ENCODE measurements at regions of chr11 and their contacts with region 1.

Region 1: DNA sequence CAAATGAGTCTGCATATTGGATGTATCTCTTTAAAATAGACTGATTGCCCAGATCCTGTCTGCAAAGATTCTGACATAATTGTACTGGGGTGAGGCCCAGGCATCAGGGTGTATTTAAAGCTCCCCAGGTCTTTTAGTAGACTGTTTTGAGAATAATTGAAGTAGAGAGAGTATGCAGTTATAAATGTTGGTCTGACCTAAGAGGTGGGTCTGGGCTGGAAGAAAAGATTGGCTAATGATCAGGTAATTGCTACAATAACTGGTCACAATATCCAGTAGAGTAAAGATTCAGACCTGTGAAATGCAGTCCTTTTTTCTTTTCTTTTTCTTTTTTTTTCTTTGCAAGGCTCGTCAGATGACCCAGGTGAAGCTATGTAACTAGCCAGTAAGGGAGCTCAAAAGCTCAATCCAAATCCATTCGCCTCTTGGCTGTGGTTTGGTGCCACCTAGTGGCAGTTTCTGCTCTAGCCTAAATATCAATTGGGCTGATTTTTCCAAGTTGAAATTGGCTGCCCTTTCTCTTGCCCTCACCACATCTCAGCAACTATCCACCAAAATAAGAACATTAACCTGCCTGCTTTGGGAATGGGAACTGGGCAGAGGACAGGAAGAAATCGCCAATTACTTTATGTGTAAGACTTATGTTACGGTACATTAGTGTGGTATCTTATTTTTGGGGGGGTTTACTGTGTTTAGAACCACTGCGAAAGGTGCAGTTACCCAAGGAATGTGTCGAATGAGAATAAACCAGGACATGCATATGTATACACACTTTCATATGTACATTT is 45.9 kb downstream of the ZNF143 start:
- DNase-seq: peak; percentile 88
- ATAC-seq: peak; percentile 88
- H3K4me3 Mint-ChIP-seq: no peak overlapping the region
- H3K27ac Mint-ChIP-seq: no peak overlapping the region
- H3K4me1 Mint-ChIP-seq: peaks cover 4% of the 10 kb centered on the region
- H3K27me3 Mint-ChIP-seq: no peaks in the 10 kb centered on the region

Region 2: DNA sequence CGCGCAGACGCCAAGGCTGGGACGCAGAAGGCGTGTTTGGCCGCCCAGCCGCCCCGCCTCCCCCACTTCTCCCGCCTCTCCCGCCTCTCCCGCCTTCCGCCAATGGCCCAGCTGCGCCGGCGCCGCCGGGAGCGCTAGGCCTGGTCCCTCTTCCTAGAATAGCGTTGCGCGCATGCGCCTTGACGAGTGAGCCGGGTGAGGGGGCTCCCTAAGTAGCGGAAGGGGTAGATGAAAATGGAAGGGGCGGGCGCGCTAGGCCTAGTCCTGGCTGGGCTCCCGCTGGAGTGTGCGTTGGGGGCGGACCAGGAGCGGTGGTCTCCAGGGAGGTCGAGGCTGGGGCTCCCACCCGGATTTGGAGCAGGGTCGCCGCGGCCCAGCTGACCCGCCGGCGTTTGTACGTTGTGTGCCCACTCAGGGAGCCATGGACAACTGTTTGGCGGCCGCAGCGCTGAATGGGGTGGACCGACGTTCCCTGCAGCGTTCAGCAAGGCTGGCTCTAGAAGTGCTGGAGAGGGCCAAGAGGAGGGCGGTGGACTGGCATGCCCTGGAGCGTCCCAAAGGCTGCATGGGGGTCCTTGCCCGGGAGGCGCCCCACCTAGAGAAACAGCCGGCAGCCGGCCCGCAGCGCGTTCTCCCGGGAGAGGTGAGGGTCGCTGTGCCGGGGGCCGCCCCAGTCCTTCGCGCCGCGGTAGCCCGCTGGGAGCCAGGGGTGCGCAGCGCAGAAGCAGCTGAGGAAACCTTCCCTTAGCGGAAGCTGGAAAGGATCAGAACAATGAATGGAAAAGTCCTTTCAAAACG is 595.5 kb before region 1 on chr11 and contains the start of gene AKIP1:
- CTCF ChIA-PET with region 1: interaction called, 5 read pairs
- POLR2A ChIA-PET with region 1: no interaction called
- intact Hi-C with region 1: loop called in 1 of 2 experiments (anchors 2 kb)
- DNase-seq: peak; percentile 94
- ATAC-seq: peak; percentile 76
- H3K4me3 Mint-ChIP-seq: peak within 1 kb of the TSS; percentile 86
- H3K27ac Mint-ChIP-seq: peak within 1 kb of the TSS; percentile 89
- H3K4me1 Mint-ChIP-seq: peaks cover 45% of the 10 kb centered on the region
- H3K27me3 Mint-ChIP-seq: peaks cover 6% of the 10 kb centered on the region
- total RNA-seq, gene AKIP1: 29.8 to 32.2 TPM

Region 3: DNA sequence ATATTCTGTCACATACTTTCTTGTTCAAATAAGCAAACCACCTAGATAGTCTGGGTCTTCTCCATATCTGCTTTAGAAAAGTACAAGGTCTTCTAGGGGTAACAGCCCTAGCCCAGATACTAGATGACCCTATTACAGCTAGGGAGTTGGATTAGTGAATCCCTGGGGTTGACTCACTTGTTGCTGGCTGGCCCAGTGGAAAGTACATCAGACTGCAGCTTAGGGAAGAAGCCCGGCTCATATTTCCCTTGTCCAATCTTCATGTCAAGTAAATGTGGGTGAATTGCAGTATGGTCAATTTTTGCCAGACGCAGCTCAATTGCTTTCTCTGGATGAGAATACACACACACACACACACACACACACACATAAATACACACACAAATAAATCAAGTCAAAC is 336.2 kb before region 1 on chr11:
- CTCF ChIA-PET with region 1: interaction called, 54 read pairs
- POLR2A ChIA-PET with region 1: interaction called, 3 read pairs
- intact Hi-C with region 1: loop called (anchors 1 kb)
- DNase-seq: no peak
- ATAC-seq: no peak
- H3K4me3 Mint-ChIP-seq: no peak overlapping the region
- H3K27ac Mint-ChIP-seq: no peak overlapping the region
- H3K4me1 Mint-ChIP-seq: peaks cover 13% of the 10 kb centered on the region
- H3K27me3 Mint-ChIP-seq: no peaks in the 10 kb centered on the region

Region 4: DNA sequence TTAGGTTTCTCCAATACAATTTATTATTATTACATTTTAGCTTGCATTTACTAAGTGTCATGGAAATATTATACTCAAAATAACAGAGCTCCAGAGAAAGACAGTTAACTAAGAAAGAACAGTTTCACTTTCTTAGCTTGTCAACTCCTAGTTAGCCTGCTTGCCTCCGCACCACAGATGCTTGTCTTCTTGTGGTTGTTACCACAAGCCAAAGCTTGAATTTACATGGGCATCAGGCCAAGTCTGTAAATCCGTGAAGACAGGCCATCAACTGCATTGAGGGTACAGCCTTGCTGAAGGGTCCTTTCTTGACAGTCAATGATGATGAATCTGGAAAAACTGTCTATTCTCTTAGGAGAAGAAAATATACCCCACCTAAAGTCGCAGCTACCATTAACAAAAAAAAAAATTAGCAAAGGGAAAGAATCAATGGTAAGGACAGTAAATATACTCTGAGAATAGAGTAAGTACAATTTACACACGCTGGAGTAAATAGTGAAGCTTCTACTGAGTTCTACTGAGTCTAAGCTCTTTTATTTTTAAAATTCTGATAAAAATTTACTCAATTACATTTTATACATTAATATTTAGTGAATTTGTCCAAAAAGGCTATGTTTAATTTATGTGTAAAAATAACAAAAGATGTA is 225.9 kb before region 1 on chr11:
- CTCF ChIA-PET with region 1: interaction called, 3 read pairs
- POLR2A ChIA-PET with region 1: no interaction called
- intact Hi-C with region 1: loop called in 1 of 2 experiments (anchors 5 kb)
- DNase-seq: peak; percentile 73
- ATAC-seq: peak; percentile 95
- H3K4me3 Mint-ChIP-seq: no peak overlapping the region
- H3K27ac Mint-ChIP-seq: no peak overlapping the region
- H3K4me1 Mint-ChIP-seq: peaks cover 14% of the 10 kb centered on the region
- H3K27me3 Mint-ChIP-seq: no peaks in the 10 kb centered on the region

Region 5: DNA sequence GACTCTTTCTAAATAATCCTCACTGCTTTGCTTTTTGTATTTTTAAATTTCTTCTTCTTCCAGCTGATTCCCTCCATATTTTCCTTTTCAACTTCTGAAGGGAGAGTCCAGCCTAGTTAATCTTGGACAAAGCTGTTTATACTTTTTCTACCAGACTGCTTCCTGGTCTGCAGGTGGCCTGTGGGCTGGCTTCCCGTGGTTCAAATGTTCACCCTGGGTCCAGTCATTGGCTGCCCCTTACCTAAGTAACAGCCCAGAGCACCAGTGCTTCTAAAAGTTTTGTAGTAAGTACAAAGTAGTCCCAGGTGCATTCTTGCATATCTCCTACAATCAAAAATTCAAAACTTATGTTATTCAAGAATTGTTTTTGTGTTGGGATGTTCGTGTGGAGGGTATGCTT is 26.8 kb before region 1 on chr11:
- CTCF ChIA-PET with region 1: interaction called, 11 read pairs
- POLR2A ChIA-PET with region 1: no interaction called
- intact Hi-C with region 1: no loop called
- DNase-seq: no peak
- ATAC-seq: no peak
- H3K4me3 Mint-ChIP-seq: no peak overlapping the region
- H3K27ac Mint-ChIP-seq: no peak overlapping the region
- H3K4me1 Mint-ChIP-seq: no peaks in the 10 kb centered on the region
- H3K27me3 Mint-ChIP-seq: no peaks in the 10 kb centered on the region

Region 6: DNA sequence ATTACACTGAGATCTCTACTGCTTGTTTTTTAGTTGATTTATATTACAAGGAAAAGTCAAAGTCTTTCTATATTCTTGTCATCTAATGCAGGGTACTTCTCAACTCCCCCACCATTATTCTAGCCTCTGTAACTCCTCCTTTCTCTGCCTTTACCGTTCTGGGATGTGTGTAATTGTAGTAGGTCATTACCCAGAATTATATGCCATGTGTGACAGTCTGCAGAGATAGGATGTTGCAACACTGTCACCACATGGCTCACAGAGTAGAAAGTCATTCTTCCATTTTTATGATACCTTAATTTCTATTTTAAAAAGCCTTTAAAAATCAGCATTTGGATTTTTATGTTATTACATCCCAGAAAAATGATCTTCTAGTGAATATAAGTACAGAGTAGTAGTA is 13.2 kb before region 1 on chr11:
- CTCF ChIA-PET with region 1: interaction called, 27 read pairs
- POLR2A ChIA-PET with region 1: no interaction called
- intact Hi-C with region 1: no loop called
- DNase-seq: no peak
- ATAC-seq: no peak
- H3K4me3 Mint-ChIP-seq: no peak overlapping the region
- H3K27ac Mint-ChIP-seq: no peak overlapping the region
- H3K4me1 Mint-ChIP-seq: no peaks in the 10 kb centered on the region
- H3K27me3 Mint-ChIP-seq: no peaks in the 10 kb centered on the region

Region 7: GRCh38 chr11:9534791-9535781 is 28.4 kb after region 1 on chr11:
- CTCF ChIA-PET with region 1: interaction called, 33 read pairs
- POLR2A ChIA-PET with region 1: no interaction called
- intact Hi-C with region 1: no loop called
- DNase-seq: peak; percentile 91
- ATAC-seq: peak; percentile 71
- H3K4me3 Mint-ChIP-seq: no peak overlapping the region
- H3K27ac Mint-ChIP-seq: no peak overlapping the region
- H3K4me1 Mint-ChIP-seq: no peaks in the 10 kb centered on the region
- H3K27me3 Mint-ChIP-seq: no peaks in the 10 kb centered on the region

Region 8: GRCh38 chr11:9755561-9756185 is 249.0 kb after region 1 on chr11:
- CTCF ChIA-PET with region 1: no interaction called
- POLR2A ChIA-PET with region 1: no interaction called
- intact Hi-C with region 1: no loop called
- DNase-seq: no peak
- ATAC-seq: no peak
- H3K4me3 Mint-ChIP-seq: no peak overlapping the region
- H3K27ac Mint-ChIP-seq: no peak overlapping the region
- H3K4me1 Mint-ChIP-seq: peaks cover 45% of the 10 kb centered on the region
- H3K27me3 Mint-ChIP-seq: no peaks in the 10 kb centered on the region

Measured in activated CD4-positive, alpha-beta T cell treated with anti-CD3 and anti-CD28 coated beads for 36 hours (primary cell).